Left colon (tissue), 2 donors: ENCODE measurements at regions of chr15 and their contacts with region 1.

Region 1: DNA sequence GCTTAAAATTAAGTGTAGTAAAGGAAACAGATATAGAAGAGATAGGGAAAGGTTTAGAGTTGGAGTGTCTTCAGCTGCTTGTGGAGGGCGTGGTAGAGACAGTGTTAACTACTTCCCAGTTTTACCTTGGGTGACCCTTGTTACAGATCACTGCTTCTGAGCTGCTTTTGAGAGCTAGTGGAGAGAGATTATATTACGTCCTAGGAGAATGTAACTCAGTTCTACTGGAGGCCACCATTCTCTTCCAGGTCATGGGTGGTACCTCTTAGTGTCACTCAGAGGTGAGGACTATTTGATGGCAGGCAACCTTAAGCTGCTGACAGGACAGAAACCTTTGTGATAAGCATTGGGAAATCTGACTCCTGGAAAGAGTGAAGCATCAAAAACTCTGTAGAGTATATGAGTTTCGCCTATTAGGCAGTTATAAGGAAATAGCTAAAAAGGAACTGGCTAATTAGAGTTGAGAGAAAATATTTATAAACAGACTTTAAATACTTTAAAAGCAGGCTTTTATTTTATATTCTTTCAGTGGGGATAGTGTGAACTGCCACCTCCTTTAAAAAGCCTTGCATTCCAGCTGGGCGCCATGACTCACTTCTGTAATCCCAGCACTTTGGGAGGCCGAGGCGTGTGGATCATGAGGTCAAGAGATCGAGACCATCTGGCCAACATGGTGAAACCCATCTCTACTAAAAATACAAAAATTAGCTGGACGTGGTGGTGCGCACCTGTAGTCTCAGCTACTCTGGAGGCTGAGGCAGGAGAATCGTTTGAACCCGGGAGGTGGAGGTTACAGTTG is 106.5 kb downstream of the ZNF609 start:
- DNase-seq: no peak
- ATAC-seq: peak; percentile 94

Region 2: DNA sequence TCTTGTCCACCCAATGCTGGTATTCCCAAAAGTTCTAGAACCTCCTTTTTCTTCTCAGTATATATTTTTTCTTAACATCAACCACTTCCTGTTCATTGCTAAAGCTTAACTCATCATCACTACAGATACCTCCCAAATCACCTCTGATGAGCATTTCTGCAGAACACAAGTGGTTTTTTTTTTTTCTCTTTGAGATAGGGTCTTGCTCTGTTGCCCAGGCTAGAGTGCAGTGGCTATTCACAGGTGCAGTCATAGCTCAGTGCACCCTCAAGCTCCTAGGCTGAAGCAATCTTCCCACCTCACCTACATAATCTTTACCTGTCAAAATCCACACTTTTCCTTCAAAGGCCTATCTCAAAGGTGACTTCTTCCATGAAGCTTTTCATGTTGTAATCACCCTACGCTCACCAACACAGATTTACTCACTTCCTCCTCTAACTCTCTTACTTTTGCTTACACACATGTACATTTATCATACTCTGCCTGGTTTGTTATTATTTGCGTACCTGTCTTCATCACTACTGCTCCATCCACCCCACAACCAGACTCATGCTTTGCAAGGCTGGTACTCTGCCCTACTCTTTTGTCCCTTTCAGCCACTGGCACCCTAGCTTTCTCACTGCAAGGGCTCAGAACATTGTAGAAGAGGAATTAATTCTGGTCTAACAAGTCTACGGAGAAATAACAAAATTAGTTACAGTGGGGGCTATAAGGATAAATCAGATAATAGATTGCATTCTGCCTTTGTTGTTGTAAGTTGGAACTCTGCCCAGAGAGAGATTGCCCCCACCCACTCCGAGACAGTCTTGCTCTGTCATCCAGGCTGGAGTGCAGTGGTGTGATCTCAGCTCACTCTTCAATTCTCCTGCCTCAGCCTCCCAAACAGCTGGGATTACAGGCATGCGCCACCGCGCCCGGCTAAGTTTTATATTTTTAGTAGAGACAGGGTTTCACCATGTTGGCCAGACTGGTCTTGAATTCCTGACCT is 760.5 kb before region 1 on chr15:
- intact Hi-C with region 1: no loop called
- DNase-seq: no peak
- ATAC-seq: peak; percentile 36

Region 3: DNA sequence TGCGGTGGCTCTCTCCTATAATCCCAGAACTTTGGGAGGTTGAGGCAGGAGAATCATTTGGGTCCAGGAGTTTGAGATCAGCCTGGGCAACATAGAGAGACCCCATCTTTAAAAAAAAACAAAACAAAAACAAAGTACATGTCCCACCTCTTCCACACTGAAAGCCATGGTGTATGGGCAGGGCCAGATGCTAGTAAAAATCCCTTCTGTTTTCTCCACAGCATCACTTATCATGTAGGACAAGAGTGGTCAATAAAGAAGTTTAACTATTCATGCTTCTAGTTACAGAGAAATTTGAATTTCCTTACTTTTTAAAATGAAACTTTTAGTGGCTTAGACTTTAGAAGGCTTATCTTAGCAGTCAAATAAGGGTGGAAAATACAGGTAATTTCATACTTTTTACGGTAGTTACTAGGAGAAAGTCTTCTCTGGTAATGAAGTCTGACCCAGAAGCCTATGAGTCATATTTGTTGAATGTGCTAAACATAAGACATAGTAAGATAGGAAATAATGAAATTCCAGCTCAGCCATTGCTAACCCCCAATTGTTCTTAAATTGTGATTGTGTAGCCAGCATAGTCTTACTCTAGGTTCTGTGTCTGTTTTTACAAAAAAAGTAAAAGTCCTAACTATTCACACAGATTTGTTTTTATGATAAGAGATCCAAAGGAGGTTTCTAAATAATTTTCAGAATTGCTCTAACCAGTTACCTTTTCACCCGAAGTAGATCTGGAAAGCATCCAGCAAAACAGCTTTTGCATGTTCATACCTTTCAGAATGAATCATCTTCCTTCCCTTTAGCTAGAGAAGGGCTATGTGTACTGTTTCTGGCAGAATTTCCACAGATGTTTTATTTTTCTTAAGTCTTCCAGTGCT is 122.8 kb before region 1 on chr15:
- intact Hi-C with region 1: no loop called
- DNase-seq: no peak
- ATAC-seq: no peak

Region 4: DNA sequence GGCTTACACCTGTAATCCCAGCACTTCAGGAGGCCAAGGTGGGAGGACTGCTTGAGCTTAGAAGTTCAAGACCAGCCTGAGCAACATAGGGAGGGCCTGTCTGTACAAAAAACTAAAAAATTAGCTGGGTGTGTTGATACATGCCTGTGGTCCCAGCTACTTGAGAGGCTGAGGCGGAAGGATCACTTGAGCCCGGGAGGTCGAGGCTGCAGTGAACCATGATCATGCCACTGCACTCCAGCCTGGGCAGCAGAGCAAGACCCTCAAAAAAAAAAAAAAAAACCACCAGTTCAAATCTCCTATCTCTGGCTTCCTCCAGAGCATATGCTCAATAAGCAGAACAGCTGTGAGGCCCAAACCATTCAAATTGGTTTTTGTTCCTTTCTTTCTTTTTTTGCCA is 53.0 kb before region 1 on chr15:
- intact Hi-C with region 1: loop called in 1 of 2 experiments (anchors 5 kb)
- DNase-seq: no peak
- ATAC-seq: no peak